ENCODE measurements at regions of chr2 and their contacts with region 1.

Region 1: DNA sequence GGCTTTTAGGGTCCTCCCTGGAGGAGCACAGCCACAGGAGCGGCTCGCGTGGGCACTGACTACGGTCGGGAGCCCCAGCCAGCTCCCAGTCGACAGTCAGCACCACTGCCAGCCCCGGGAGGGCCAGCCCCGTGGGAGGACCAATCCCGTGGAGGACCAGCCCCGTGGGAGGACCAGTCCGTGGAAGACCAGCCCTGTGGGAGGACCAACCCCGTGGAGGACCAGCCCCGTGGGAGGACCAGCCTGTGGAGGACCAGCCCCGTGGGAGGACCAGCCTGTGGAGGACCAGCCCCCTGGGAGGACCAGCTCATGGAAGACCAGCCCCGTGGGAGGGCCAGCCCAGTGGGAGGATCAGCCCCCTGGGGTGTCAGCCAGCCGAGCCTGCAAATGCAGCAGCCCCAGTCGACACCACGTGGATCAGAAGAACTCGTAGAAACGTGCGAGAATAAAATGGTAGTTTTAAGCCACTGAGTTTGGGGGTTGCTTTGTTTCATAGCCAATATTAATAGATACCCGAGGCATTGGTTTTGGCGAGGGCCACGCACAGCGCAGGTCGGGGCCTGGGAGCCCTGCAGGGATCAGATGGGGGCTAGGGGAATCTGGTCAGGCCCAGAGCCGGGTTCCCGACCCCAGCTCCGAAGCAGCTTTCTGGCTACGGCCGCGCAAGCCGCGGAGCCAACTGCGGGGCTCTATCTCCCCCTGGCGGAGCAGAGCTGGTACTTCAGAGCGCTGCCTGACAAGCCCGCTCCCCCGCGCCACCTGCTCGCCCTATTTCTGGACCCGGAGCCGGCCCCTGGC is 73.0 kb downstream of the TEX51 start:
- DNase-seq: no peak
- ATAC-seq: peak; percentile 96
- H3K4me3 ChIP-seq: no peak overlapping the region
- H3K27ac ChIP-seq: no peak overlapping the region
- H3K4me1 ChIP-seq: no peaks in the 10 kb centered on the region
- H3K27me3 ChIP-seq: peaks cover 0 to 3% of the 10 kb centered on the region in 2 experiments; a peak in 3 of 4 replicates
- CTCF ChIP-seq: peak; percentile 80 to 97 (median 89)
- EP300 ChIP-seq: no peak
- POLR2A ChIP-seq: no peak
- RAD21 ChIP-seq: peak; percentile 68

Region 2: GRCh38 chr2:126886211-126886915 is 85.3 kb before region 1 on chr2:
- CTCF ChIA-PET with region 1: interaction called, 10 read pairs
- POLR2A ChIA-PET with region 1: no interaction called
- RAD21 ChIA-PET with region 1: no interaction called
- SMC1A ChIA-PET with region 1: no interaction called
- in situ Hi-C with region 1: no loop called
- intact Hi-C with region 1: no loop called
- DNase-seq: no peak
- ATAC-seq: peak; percentile 95
- H3K4me3 ChIP-seq: no peak overlapping the region
- H3K27ac ChIP-seq: no peak overlapping the region
- H3K4me1 ChIP-seq: no peaks in the 10 kb centered on the region
- H3K27me3 ChIP-seq: no peaks in the 10 kb centered on the region; a peak in 1 of 4 replicates
- CTCF ChIP-seq: peak; percentile 66 to 69 (median 66)
- EP300 ChIP-seq: no peak
- POLR2A ChIP-seq: no peak
- RAD21 ChIP-seq: 0 out of 2 replicates have a peak, but pooled peaks have one; percentile 15

Region 3: GRCh38 chr2:127039387-127040031 is 67.8 kb after region 1 on chr2:
- CTCF ChIA-PET with region 1: interaction called, 9 read pairs
- POLR2A ChIA-PET with region 1: no interaction called
- RAD21 ChIA-PET with region 1: interaction called, 4 read pairs
- SMC1A ChIA-PET with region 1: no interaction called
- in situ Hi-C with region 1: no loop called
- intact Hi-C with region 1: loop called (anchors 5 kb)
- DNase-seq: peak; percentile 44
- ATAC-seq: peak; percentile 88
- H3K4me3 ChIP-seq: no peak overlapping the region
- H3K27ac ChIP-seq: no peak overlapping the region
- H3K4me1 ChIP-seq: peaks cover 10% of the 10 kb centered on the region
- H3K27me3 ChIP-seq: no peaks in the 10 kb centered on the region
- CTCF ChIP-seq: no peak
- EP300 ChIP-seq: no peak
- POLR2A ChIP-seq: no peak
- RAD21 ChIP-seq: no peak

Region 4: GRCh38 chr2:127049927-127050802 is 78.5 kb after region 1 on chr2:
- CTCF ChIA-PET with region 1: interaction called, 21 read pairs
- POLR2A ChIA-PET with region 1: no interaction called
- RAD21 ChIA-PET with region 1: interaction called, 7 read pairs
- SMC1A ChIA-PET with region 1: interaction called, 3 read pairs
- in situ Hi-C with region 1: no loop called
- intact Hi-C with region 1: loop called (anchors 2 kb)
- DNase-seq: no peak
- ATAC-seq: peak; percentile 93
- H3K4me3 ChIP-seq: no peak overlapping the region
- H3K27ac ChIP-seq: no peak overlapping the region
- H3K4me1 ChIP-seq: no peaks in the 10 kb centered on the region
- H3K27me3 ChIP-seq: no peaks in the 10 kb centered on the region
- CTCF ChIP-seq: peak; percentile 81 to 97 (median 86)
- EP300 ChIP-seq: no peak
- POLR2A ChIP-seq: no peak
- RAD21 ChIP-seq: peak; percentile 62

Measured in GM12878 (cell line).